GM10248 (cell line): ENCODE measurements at regions of chr11 and their contacts with region 1.

Region 1: DNA sequence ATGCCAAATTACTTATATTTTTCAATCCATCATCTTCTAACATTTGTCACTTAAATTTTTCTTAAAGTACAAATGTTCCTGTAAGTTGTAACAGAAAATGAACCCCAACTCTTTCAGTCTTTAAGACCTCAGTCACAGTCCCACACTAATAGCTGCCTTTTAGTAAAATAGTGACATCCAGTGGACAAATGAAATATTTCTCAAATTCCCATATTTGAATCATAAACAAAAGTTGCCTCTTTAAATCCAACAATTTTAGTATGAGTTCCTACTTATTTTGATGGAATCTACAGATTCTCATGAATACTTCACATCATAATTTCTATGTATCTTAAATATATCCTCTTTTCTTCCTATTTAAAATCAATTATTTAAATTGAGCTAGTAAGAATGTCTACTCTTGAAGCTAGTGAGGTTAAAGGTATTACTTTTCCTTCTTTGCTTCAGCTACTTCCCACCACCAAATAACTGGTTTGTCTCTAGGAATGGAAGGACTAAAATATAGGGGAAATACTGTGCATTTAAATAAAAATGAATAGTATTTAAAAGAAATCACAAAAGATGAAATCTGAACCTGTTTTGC is 9.2 kb downstream of the LIN7C start:
- DNase-seq: no peak
- CTCF ChIP-seq: peak; percentile 44

Region 2: GRCh38 chr11:27183672-27184457 is 313.5 kb before region 1 on chr11:
- CTCF ChIA-PET with region 1: interaction called, 19 read pairs
- POLR2A ChIA-PET with region 1: no interaction called
- DNase-seq: peak; percentile 22
- CTCF ChIP-seq: peak; percentile 51

Region 3: DNA sequence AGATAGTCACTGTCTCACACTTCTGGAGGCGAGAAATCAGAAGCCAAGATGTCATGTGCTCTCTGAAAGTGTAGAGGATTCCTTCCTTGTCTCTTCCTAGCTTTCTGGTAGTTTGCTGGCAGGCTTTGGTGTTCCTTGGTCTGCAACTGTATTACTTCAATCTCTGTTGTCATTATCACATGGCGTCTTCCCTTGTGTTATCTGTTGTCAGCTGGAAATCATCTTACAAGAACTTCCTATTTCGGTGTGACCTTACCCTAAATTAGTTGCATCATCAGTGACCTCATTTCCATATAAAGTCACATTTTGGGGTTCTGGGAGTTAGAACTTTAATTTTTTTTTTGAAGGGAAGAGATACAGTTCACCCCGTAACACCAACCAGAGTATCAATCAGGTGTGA is 12.5 kb after region 1 on chr11:
- CTCF ChIA-PET with region 1: interaction called, 16 read pairs
- POLR2A ChIA-PET with region 1: no interaction called
- DNase-seq: no peak
- CTCF ChIP-seq: no peak